ENCODE measurements at regions of chr12 and their contacts with region 1.

Region 1: GRCh38 chr12:48165094-48165981 is 8.0 kb upstream of the ASB8 start:
- DNase-seq: peak; percentile 44
- ATAC-seq: 0 out of 3 replicates have a peak, but pooled peaks have one; percentile 48
- H3K4me3 ChIP-seq: no peak overlapping the region
- H3K27ac ChIP-seq: no peak overlapping the region
- H3K4me1 ChIP-seq: peaks cover 8% of the 10 kb centered on the region; the same call in 1 of the 2 replicates
- H3K27me3 ChIP-seq: no peaks in the 10 kb centered on the region
- CTCF ChIP-seq: peak; percentile 81
- EP300 ChIP-seq: no peak
- POLR2A ChIP-seq: no peak
- RAD21 ChIP-seq: peak; percentile 68

Region 2: GRCh38 chr12:47904713-47905310 is 260.5 kb before region 1 on chr12 and contains the start of gene VDR:
- CTCF ChIA-PET with region 1: interaction called, 6 read pairs
- POLR2A ChIA-PET with region 1: no interaction called
- in situ Hi-C with region 1: loop called (anchors 10 kb)
- intact Hi-C with region 1: loop called (anchors 2 kb)
- DNase-seq: peak; percentile 28
- ATAC-seq: peak; percentile 31
- H3K4me3 ChIP-seq: peak within 1 kb of the TSS; percentile 30 to 60 (median 42); a peak in 5 of 6 replicates
- H3K27ac ChIP-seq: no peak within 1 kb of the TSS
- H3K4me1 ChIP-seq: peaks cover 59% of the 10 kb centered on the region
- H3K27me3 ChIP-seq: peaks cover 0 to 31% of the 10 kb centered on the region in 2 experiments; a peak in 3 of 5 replicates
- CTCF ChIP-seq: no peak
- EP300 ChIP-seq: no peak
- POLR2A ChIP-seq: no peak
- RAD21 ChIP-seq: no peak
- total RNA-seq, gene VDR: 0.21 and 0.33 TPM in 2 replicates

Region 3: GRCh38 chr12:47949441-47950308 is 215.7 kb before region 1 on chr12:
- CTCF ChIA-PET with region 1: no interaction called
- POLR2A ChIA-PET with region 1: no interaction called
- in situ Hi-C with region 1: loop called (anchors 10 kb)
- intact Hi-C with region 1: loop called (anchors 10 kb)
- DNase-seq: peak; percentile 76
- ATAC-seq: peak; percentile 89
- H3K4me3 ChIP-seq: peak overlapping the region; percentile 34 to 54 (median 41); a peak in 5 of 6 replicates
- H3K27ac ChIP-seq: peak overlapping the region; percentile 51
- H3K4me1 ChIP-seq: peaks cover 60% of the 10 kb centered on the region
- H3K27me3 ChIP-seq: peaks cover 3 to 25% of the 10 kb centered on the region in 2 experiments
- CTCF ChIP-seq: peak; percentile 89
- EP300 ChIP-seq: 0 out of 4 replicates have a peak, but pooled peaks of 1 of the 2 experiments have one; percentile 20
- POLR2A ChIP-seq: no peak
- RAD21 ChIP-seq: peak; percentile 78

Region 4: DNA sequence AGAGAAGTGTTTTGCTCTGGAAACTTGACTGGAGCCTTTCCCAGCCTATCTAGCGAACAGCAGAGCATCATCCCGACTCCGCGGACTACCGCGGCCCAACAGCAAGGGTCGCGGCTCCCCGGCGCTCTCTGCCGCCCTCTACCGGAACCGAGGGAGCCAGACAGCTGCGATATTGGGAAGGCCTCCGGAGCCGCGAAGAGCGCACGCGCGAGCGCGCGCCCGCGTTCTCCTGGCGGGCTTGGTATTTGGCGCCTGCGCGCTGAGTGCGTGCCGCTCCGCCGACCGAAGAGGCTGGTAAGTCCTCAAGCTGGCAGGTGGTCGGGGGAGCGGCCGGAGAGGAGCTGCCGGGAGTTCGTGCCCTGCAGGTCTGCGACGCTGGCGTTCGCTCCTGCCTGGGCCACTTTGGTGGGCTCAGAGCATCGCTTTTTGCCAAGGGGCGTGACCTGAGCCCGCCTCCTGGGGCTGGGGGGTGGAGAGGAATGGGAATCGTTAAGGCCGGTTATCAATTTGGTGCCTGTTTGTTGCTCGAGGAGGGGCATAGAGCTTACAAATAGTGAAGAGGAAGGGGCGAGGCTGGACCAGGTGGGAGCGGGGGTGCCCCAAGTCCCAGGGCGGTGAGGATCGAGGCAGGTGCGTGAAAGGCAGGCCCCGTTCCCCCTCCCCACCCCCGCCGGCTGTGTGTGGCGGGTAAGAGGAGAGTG is 201.8 kb before region 1 on chr12 and contains the start of gene TMEM106C:
- CTCF ChIA-PET with region 1: interaction called, 4 read pairs
- POLR2A ChIA-PET with region 1: no interaction called
- in situ Hi-C with region 1: no loop called
- intact Hi-C with region 1: loop called (anchors 5 kb)
- DNase-seq: peak; percentile 82
- ATAC-seq: peak; percentile 96
- H3K4me3 ChIP-seq: peak within 1 kb of the TSS; percentile 66 to 87 (median 78)
- H3K27ac ChIP-seq: no peak within 1 kb of the TSS
- H3K4me1 ChIP-seq: peaks cover 18% of the 10 kb centered on the region
- H3K27me3 ChIP-seq: peaks cover 4 to 20% of the 10 kb centered on the region in 2 experiments; a peak in 4 of 5 replicates
- CTCF ChIP-seq: peak; percentile 98
- EP300 ChIP-seq: no peak
- POLR2A ChIP-seq: peak; percentile 38 to 63; a peak in 3 of 4 replicates
- RAD21 ChIP-seq: peak; percentile 92
- total RNA-seq, gene TMEM106C: 132 and 134 TPM in 2 replicates

Region 5: DNA sequence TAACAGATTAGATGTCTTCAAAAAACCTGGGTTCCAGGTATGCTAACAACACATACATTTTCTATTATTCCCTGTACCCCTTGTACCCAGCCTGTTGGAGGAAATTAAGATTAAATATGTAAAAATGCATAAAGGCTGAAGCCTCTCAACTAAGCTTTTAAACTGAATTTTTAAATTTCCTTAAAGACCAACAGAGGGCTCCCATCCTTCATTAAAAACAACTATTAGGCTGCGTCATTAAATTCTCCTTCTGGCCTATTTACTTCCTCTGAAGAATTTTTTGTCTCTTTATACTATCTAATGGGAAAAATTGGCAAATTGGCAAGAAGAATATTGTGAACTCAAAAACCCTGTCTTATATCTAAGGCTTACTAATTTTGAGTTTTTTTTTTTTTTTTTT is 81.3 kb before region 1 on chr12:
- CTCF ChIA-PET with region 1: interaction called, 6 read pairs
- POLR2A ChIA-PET with region 1: no interaction called
- in situ Hi-C with region 1: loop called (anchors 10 kb)
- intact Hi-C with region 1: loop called (anchors 1 kb)
- DNase-seq: no peak
- ATAC-seq: no peak
- H3K4me3 ChIP-seq: no peak overlapping the region
- H3K27ac ChIP-seq: no peak overlapping the region
- H3K4me1 ChIP-seq: no peaks in the 10 kb centered on the region
- H3K27me3 ChIP-seq: no peaks in the 10 kb centered on the region
- CTCF ChIP-seq: no peak
- EP300 ChIP-seq: no peak
- POLR2A ChIP-seq: no peak
- RAD21 ChIP-seq: no peak

Region 6: DNA sequence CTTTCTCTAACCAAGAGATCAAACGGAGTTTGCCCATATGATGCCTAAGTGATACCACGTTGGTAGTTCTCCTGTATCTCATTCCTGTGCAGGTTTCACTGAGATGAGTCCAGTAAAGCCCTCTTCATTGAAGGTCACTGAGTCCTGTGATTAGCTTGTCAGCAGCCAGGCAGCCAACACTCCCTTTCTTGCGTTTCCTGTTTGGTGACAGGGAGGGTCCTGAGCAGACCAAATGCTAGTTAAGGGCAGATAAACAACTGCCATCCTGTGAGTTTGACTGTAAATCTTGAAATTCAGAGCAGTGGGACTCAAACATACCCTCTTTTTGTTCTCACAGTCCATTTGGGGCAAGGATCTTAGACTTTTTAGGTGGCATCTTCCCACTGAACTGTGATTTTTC is 146.0 kb after region 1 on chr12:
- CTCF ChIA-PET with region 1: no interaction called
- POLR2A ChIA-PET with region 1: no interaction called
- in situ Hi-C with region 1: no loop called
- intact Hi-C with region 1: no loop called
- DNase-seq: no peak
- ATAC-seq: no peak
- H3K4me3 ChIP-seq: no peak overlapping the region
- H3K27ac ChIP-seq: no peak overlapping the region
- H3K4me1 ChIP-seq: no peaks in the 10 kb centered on the region
- H3K27me3 ChIP-seq: peaks cover 2 to 11% of the 10 kb centered on the region in 2 experiments; a peak in 3 of 5 replicates
- CTCF ChIP-seq: no peak
- EP300 ChIP-seq: no peak
- POLR2A ChIP-seq: no peak
- RAD21 ChIP-seq: no peak

Region 7: GRCh38 chr12:48640854-48641253 is 475.5 kb after region 1 on chr12:
- CTCF ChIA-PET with region 1: no interaction called
- POLR2A ChIA-PET with region 1: no interaction called
- in situ Hi-C with region 1: no loop called
- intact Hi-C with region 1: no loop called
- DNase-seq: no peak
- ATAC-seq: peak; percentile 31; the same call in 1 of the 3 replicates
- H3K4me3 ChIP-seq: no peak overlapping the region
- H3K27ac ChIP-seq: no peak overlapping the region
- H3K4me1 ChIP-seq: no peaks in the 10 kb centered on the region
- H3K27me3 ChIP-seq: no peaks in the 10 kb centered on the region
- CTCF ChIP-seq: no peak
- EP300 ChIP-seq: no peak
- POLR2A ChIP-seq: no peak
- RAD21 ChIP-seq: no peak

Measured in HepG2 (cell line).